Activated CD8-positive, alpha-beta memory T cell treated with anti-CD3 and anti-CD28 coated beads, Interleukin-2, amount 10 ng/mL, durations not matched to agents 7 days and 5 days (primary cell): ENCODE measurements at regions of chr5 and their contacts with region 1.

Region 1: DNA sequence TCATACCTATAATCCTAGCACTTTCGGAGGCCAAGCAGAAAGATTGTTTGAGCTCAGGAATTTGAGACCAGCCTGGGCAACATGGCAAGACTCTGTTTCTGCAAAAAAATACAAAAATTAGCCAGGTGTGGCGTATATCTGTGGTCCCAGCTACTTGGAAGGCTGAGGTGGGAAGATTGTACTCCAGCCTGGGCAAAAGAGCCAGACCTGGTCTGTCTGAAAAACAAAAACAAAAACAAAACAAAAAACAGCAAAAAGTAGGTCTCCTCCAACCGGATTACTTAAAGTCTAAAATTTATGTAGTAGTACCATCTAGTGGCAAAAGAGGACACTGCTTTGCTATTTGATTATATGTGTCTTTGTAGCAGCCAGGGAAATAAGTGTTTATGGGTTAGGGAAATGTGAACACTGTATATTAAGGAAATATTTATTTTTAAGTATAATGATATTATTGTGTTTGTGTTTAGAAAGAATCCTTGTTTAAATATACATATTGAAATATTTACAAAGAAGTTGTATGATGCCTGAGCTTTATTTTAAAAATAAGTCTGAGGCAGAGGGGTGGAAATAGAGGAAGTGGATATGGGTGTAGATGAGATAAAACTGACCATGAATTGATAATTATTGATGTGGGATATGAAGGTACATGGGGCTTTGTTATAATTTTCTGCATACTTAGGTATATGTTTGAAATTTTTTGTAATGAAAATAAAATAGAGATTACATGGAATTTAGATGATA is 20.0 kb downstream of the APC start:
- DNase-seq: no peak
- ATAC-seq: peak; percentile 77
- H3K4me3 Mint-ChIP-seq: no peak overlapping the region
- H3K27ac Mint-ChIP-seq: peak overlapping the region; percentile 59
- H3K4me1 Mint-ChIP-seq: peaks cover 2% of the 10 kb centered on the region
- H3K27me3 Mint-ChIP-seq: no peaks in the 10 kb centered on the region

Region 2: GRCh38 chr5:112174959-112175594 is 582.6 kb before region 1 on chr5:
- CTCF ChIA-PET with region 1: interaction called, 10 read pairs
- DNase-seq: peak; percentile 52
- ATAC-seq: peak; percentile 80
- H3K4me3 Mint-ChIP-seq: no peak overlapping the region
- H3K27ac Mint-ChIP-seq: no peak overlapping the region
- H3K4me1 Mint-ChIP-seq: no peaks in the 10 kb centered on the region
- H3K27me3 Mint-ChIP-seq: peaks cover 11% of the 10 kb centered on the region

Region 3: GRCh38 chr5:112551419-112552032 is 206.1 kb before region 1 on chr5:
- CTCF ChIA-PET with region 1: interaction called, 16 read pairs
- DNase-seq: peak; percentile 49
- ATAC-seq: peak; percentile 45
- H3K4me3 Mint-ChIP-seq: no peak overlapping the region
- H3K27ac Mint-ChIP-seq: no peak overlapping the region
- H3K4me1 Mint-ChIP-seq: peaks cover 3% of the 10 kb centered on the region
- H3K27me3 Mint-ChIP-seq: peaks cover 13% of the 10 kb centered on the region

Region 4: GRCh38 chr5:112594095-112594850 is 163.4 kb before region 1 on chr5:
- CTCF ChIA-PET with region 1: no interaction called
- DNase-seq: no peak
- ATAC-seq: no peak
- H3K4me3 Mint-ChIP-seq: no peak overlapping the region
- H3K27ac Mint-ChIP-seq: no peak overlapping the region
- H3K4me1 Mint-ChIP-seq: peaks cover 2% of the 10 kb centered on the region
- H3K27me3 Mint-ChIP-seq: peaks cover 13% of the 10 kb centered on the region

Region 5: GRCh38 chr5:112691758-112692157 is 65.9 kb before region 1 on chr5:
- CTCF ChIA-PET with region 1: interaction called, 27 read pairs
- DNase-seq: peak; percentile 58
- ATAC-seq: peak; percentile 66
- H3K4me3 Mint-ChIP-seq: no peak overlapping the region
- H3K27ac Mint-ChIP-seq: no peak overlapping the region
- H3K4me1 Mint-ChIP-seq: peaks cover 5% of the 10 kb centered on the region
- H3K27me3 Mint-ChIP-seq: peaks cover 31% of the 10 kb centered on the region

Region 6: DNA sequence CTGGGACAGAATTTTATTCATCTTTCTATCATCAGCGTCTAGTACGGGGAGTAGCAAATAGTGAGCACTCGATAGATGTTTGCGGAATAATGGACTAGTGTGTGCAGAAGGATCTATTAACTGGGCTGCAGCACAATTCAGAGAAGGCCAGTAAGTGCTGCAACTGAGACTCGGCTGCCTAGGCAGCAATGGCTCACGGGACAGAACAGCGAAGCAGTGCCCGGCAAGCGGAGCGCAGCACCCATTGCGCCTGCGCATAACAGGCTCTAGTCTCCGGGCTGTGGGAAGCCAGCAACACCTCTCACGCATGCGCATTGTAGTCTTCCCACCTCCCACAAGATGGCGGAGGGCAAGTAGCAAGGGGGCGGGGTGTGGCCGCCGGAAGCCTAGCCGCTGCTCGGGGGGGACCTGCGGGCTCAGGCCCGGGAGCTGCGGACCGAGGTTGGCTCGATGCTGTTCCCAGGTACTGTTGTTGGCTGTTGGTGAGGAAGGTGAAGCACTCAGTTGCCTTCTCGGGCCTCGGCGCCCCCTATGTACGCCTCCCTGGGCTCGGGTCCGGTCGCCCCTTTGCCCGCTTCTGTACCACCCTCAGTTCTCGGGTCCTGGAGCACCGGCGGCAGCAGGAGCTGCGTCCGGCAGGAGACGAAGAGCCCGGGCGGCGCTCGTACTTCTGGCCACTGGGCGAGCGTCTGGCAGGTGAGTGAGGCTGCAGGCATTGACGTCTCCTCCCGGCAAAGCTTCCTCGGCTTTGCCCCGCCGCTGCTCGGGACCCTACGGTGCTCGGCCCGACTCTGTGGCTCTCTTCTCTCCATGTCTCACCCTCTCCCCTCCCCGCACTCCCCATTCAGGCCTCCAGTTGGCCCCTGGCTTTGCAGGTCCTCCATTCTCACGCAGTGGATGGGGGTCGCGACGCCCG is 50.2 kb before region 1 on chr5:
- CTCF ChIA-PET with region 1: interaction called, 15 read pairs
- DNase-seq: peak; percentile 99
- ATAC-seq: peak; percentile 96
- H3K4me3 Mint-ChIP-seq: peak overlapping the region; percentile 95
- H3K27ac Mint-ChIP-seq: peak overlapping the region; percentile 87
- H3K4me1 Mint-ChIP-seq: peaks cover 31% of the 10 kb centered on the region
- H3K27me3 Mint-ChIP-seq: no peaks in the 10 kb centered on the region

Region 7: DNA sequence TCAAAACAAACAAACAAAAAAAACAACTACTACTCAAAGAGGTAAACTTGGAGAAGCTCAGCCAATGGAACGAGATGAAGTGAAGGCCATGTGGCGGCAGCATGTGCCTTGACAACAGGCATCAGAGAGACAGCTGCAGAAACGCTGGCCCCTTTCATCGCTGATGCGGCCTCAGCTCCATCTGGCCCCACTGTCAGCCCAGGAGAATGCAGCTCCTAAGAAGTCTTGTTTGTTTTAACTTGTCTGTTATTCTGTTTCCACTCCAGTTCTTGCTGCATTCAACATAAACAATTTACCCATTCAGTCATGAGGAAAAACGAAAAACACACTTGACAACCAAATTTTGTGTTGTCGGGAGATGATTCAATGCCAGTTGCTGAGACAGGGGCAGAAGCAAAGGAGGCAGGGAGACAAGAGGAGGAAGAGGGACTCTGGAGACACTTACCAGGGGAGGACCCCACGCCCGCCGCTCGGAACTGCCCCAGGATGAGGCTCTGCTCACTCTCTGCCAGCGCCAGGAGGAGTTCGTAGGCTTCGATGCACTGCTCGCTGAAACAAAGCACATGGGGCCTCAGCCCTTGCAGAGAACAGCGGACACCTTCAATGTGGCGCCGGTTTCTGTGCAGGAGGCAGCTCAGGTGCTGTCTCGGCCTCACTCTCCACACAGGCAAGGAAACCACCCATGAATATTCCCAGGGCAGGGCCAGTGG is 310.2 kb after region 1 on chr5:
- CTCF ChIA-PET with region 1: no interaction called
- DNase-seq: peak; percentile 22
- ATAC-seq: no peak
- H3K4me3 Mint-ChIP-seq: no peak overlapping the region
- H3K27ac Mint-ChIP-seq: no peak overlapping the region
- H3K4me1 Mint-ChIP-seq: peaks cover 7% of the 10 kb centered on the region
- H3K27me3 Mint-ChIP-seq: no peaks in the 10 kb centered on the region